Natural killer cell (primary cell): ENCODE measurements at regions of chr9 and their contacts with region 1.

Region 1: DNA sequence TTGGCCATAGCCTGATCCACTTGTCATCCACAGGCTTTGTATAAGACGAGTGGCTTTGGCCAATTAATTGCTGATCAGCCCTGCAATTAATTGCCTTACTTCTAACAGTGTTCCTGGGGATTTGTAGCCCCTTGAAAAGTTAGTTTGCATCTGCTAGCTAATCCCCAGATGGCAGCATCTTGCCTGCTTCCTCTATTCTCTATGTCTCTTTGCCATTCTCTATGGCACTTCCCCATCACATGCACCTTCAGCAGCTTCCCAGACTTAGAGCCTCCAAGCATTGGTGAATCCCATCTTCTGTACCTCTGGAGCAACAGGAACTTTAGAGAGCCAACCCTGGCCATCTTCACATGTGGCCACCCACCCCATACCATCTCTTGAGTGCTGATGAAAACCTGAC is 197.0 kb upstream of the DMAC1 start:
- DNase-seq: no peak
- ATAC-seq: no peak
- H3K4me3 ChIP-seq: no peak overlapping the region
- H3K4me3 Mint-ChIP-seq: no peak overlapping the region
- H3K27ac ChIP-seq: no peak overlapping the region
- H3K27ac Mint-ChIP-seq: no peak overlapping the region
- H3K4me1 ChIP-seq: no peaks in the 10 kb centered on the region
- H3K4me1 Mint-ChIP-seq: peaks cover 6 to 7% of the 10 kb centered on the region in 2 donors
- H3K27me3 ChIP-seq: no peaks in the 10 kb centered on the region
- H3K27me3 Mint-ChIP-seq: peaks cover 0 to 8% of the 10 kb centered on the region in 2 donors
- CTCF ChIP-seq: no peak

Region 2: GRCh38 chr9:7756088-7756487 is 240.5 kb before region 1 on chr9:
- intact Hi-C with region 1: no loop called
- DNase-seq: peak in 1 of 2 donors; percentile 18
- ATAC-seq: peak in 2 of 3 donors; percentile 48 to 68
- H3K4me3 ChIP-seq: no peak overlapping the region
- H3K4me3 Mint-ChIP-seq: no peak overlapping the region
- H3K27ac ChIP-seq: no peak overlapping the region
- H3K27ac Mint-ChIP-seq: no peak overlapping the region
- H3K4me1 ChIP-seq: no peaks in the 10 kb centered on the region
- H3K4me1 Mint-ChIP-seq: peaks cover 6% of the 10 kb centered on the region in 2 donors
- H3K27me3 ChIP-seq: no peaks in the 10 kb centered on the region
- H3K27me3 Mint-ChIP-seq: no peaks in the 10 kb centered on the region
- CTCF ChIP-seq: no peak

Region 3: DNA sequence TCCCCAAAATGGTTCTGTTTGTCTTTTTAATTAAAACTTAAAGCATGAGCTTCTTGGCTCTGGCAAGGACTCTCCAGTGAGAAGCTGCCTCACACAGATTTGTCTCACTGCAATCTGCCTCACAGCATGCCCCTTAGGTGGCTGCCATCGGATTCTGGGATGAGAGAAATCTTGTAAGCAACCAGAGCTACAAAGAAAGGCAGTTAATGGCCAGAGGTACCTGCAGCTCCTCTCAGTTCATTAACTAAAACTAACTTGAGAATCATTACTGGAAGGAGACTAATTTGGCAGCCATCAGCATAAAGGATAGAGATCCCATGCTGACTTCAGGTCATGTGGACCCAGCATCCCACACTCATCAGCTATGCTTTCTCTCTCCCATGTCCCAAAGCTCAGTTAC is 23.6 kb after region 1 on chr9:
- intact Hi-C with region 1: loop called (anchors 2 kb)
- DNase-seq: no peak
- ATAC-seq: no peak
- H3K4me3 ChIP-seq: no peak overlapping the region
- H3K4me3 Mint-ChIP-seq: no peak overlapping the region
- H3K27ac ChIP-seq: no peak overlapping the region
- H3K27ac Mint-ChIP-seq: no peak overlapping the region
- H3K4me1 ChIP-seq: no peaks in the 10 kb centered on the region
- H3K4me1 Mint-ChIP-seq: no peaks in the 10 kb centered on the region
- H3K27me3 ChIP-seq: no peaks in the 10 kb centered on the region
- H3K27me3 Mint-ChIP-seq: peaks cover 0 to 13% of the 10 kb centered on the region in 2 donors
- CTCF ChIP-seq: no peak